Endothelial cell of umbilical vein (primary cell): ENCODE measurements at regions of chr6 and their contacts with region 1.

Region 1: DNA sequence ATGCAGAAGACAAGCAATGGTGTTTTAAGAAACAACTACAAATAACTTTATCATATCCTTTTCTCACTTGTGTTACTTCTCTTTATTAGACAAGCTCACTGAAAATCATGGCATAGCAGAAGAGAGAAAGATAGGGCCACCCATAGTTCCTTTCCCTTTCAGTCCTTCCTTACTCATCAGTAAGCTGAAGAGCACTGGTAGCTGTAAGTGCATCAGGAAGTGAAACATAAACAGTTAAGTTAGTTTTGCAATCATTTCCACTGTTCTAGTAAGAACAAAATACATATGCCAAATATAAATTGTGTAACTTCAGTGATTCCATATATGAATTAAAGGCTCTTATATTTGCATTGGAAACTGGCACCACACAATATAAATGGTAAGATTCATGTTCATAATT is 220.1 kb downstream of the HACE1 start:
- DNase-seq: peak; percentile 26
- H3K4me3 ChIP-seq: no peak overlapping the region
- H3K27ac ChIP-seq: peak overlapping the region; percentile 77
- H3K4me1 ChIP-seq: peaks cover 50% of the 10 kb centered on the region
- H3K27me3 ChIP-seq: no peaks in the 10 kb centered on the region
- CTCF ChIP-seq: no peak
- POLR2A ChIP-seq: no peak

Region 2: DNA sequence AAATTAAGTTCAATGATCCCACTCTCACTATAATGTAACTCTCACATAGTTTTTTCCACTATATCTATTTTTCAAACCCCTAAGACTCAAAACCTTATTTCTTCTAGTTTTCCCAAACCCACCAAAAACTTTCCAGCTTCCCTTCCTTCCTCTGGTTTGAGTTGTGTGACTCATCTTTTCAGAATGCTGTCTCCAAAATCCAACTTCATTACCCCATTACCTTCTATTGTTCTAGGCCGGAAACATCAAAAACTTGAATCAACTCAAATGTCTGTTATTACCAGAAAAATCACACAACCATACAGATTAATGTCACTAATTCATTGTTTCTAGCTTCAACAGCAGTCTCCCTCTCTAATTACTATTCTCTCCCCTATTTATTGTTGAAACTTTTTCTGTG is 870.2 kb before region 1 on chr6:
- CTCF ChIA-PET with region 1: no interaction called
- POLR2A ChIA-PET with region 1: interaction called, 3 read pairs
- dilution Hi-C with region 1: no loop called
- intact Hi-C with region 1: loop called (anchors 10 kb)
- DNase-seq: peak; percentile 86
- H3K4me3 ChIP-seq: no peak overlapping the region
- H3K27ac ChIP-seq: peak overlapping the region; percentile 79
- H3K4me1 ChIP-seq: peaks cover 22% of the 10 kb centered on the region
- H3K27me3 ChIP-seq: no peaks in the 10 kb centered on the region
- CTCF ChIP-seq: no peak
- POLR2A ChIP-seq: no peak

Region 3: GRCh38 chr6:104653781-104654180 is 14.1 kb after region 1 on chr6:
- CTCF ChIA-PET with region 1: interaction called, 7 read pairs
- POLR2A ChIA-PET with region 1: no interaction called
- dilution Hi-C with region 1: no loop called
- intact Hi-C with region 1: loop called (anchors 2 kb)
- DNase-seq: peak; percentile 52
- H3K4me3 ChIP-seq: no peak overlapping the region
- H3K27ac ChIP-seq: peak overlapping the region; percentile 39
- H3K4me1 ChIP-seq: peaks cover 15% of the 10 kb centered on the region
- H3K27me3 ChIP-seq: no peaks in the 10 kb centered on the region
- CTCF ChIP-seq: no peak
- POLR2A ChIP-seq: no peak